ENCODE measurements at regions of chr13 and their contacts with region 1.

Region 1: DNA sequence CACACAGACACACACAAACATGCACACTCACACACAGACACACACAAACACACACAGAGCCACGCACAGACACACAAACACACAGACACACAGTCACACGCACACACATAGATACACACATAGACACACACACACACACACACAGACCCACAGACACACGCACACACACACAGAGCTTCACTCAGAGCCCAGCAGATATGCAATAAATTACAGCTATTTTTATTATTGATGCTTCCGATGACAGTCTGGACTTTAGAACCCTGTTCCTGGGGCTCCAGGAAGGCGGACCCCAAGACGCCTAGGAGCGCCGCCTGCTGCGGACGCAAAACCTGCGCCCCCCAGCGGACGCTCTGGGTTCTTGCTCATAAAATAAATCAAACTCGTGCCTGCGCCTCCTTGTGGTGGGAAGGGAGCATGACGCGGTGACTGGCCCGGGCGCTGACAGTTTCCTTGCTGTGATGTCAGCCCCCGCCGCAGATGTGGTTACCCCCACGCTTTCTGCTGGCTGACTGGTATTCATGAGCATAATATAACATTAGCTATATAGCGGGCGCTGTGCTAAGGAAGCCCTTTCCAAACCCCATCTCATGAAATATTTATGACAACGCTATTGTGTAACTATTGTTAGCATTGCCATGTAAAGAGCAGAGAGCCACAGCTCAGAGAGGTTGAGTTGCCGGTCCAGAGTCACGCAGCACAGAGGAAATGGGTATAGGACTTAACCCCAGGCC is 64.4 kb upstream of the TM9SF2 start:
- DNase-seq: peak; percentile 83
- CTCF ChIP-seq: peak; percentile 100

Region 2: GRCh38 chr13:99200432-99201167 is 236.3 kb before region 1 on chr13 and contains the start of gene UBAC2:
- CTCF ChIA-PET with region 1: interaction called, 13 read pairs
- POLR2A ChIA-PET with region 1: no interaction called
- DNase-seq: peak; percentile 99
- CTCF ChIP-seq: peak; percentile 6

Region 3: DNA sequence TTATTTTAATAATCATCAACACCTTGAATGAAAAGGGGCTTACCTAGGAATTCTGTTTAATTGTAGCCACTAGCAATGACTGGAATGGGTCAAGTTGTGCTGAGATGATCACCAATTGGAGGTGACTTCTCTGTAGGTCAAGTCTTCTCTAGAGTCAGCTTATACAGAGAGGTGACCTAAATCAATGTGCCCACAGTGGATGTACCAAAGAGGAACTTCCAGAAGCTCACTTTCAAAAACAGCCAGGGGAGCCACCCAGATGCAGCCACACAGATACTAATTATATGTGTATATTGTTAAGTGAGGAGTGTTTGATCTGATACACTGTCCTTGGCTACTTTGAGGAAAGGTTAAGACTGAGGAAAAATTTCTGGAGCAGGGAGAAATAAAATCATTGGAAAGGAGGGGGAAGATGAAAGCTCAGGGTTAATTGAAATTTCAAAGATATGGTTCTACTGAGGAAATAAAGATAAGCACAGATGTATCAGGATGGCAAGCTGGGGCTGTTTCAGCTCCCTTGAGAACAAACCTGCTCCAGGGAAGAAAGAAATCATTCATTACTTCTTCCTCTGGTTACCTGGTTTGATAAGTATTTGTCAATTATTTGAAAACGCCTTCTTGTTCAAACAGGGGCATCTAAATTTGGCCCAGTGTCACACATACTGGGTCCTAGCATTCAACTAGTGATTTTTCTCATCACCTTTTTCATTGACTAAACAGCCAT is 134.8 kb before region 1 on chr13:
- CTCF ChIA-PET with region 1: interaction called, 25 read pairs
- POLR2A ChIA-PET with region 1: no interaction called
- DNase-seq: no peak
- CTCF ChIP-seq: no peak

Region 4: DNA sequence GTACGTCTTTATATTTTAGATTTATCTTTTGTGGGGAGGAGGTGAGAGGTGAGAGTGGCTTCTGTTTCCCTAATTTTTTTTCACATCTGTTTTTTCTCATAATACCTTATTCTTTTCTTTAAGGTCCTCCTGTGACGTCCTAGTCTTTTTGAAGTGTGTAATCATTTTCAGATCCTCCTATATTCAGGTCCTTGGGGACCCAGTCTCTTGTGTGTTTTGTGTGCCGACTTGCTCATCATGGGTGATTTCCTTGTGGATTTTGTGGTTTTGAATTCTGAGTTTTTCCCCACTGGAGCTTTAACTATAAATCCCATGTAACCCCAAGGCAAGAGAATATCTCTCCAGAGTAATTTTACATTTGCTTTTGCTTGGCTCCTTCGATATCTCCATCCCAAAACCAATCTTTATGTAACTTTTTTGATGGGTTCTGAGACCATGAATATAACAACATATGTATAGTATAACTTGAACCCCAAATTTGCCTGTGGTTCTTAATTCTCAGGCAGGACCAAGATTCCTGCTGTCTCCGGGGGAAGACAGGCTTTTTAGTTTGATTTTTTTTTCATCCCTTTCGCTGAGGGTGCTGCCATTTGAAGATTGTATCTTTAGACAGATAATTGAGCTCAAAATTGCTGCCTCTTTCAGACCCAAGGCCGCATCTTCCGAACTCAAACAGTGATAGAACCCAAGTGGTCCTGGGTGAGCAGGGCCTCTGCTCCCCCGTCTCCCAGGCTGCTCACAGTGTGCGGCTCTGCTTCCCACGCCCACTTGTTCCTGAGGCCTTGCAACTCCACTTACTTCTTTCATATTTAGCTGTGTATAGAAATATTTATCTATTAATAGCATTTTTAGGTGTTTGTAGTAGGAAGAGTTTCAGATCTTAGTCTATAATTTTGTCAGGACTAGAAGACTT is 70.5 kb before region 1 on chr13:
- CTCF ChIA-PET with region 1: interaction called, 36 read pairs
- POLR2A ChIA-PET with region 1: no interaction called
- DNase-seq: no peak
- CTCF ChIP-seq: no peak

Region 5: GRCh38 chr13:99417201-99418102 is 19.4 kb before region 1 on chr13:
- CTCF ChIA-PET with region 1: interaction called, 155 read pairs
- POLR2A ChIA-PET with region 1: interaction called, 4 read pairs
- DNase-seq: no peak
- CTCF ChIP-seq: no peak

Region 6: GRCh38 chr13:99501184-99501847 is 64.5 kb after region 1 on chr13 and contains the start of gene TM9SF2:
- CTCF ChIA-PET with region 1: interaction called, 50 read pairs
- POLR2A ChIA-PET with region 1: no interaction called
- DNase-seq: peak; percentile 92
- CTCF ChIP-seq: no peak

Region 7: DNA sequence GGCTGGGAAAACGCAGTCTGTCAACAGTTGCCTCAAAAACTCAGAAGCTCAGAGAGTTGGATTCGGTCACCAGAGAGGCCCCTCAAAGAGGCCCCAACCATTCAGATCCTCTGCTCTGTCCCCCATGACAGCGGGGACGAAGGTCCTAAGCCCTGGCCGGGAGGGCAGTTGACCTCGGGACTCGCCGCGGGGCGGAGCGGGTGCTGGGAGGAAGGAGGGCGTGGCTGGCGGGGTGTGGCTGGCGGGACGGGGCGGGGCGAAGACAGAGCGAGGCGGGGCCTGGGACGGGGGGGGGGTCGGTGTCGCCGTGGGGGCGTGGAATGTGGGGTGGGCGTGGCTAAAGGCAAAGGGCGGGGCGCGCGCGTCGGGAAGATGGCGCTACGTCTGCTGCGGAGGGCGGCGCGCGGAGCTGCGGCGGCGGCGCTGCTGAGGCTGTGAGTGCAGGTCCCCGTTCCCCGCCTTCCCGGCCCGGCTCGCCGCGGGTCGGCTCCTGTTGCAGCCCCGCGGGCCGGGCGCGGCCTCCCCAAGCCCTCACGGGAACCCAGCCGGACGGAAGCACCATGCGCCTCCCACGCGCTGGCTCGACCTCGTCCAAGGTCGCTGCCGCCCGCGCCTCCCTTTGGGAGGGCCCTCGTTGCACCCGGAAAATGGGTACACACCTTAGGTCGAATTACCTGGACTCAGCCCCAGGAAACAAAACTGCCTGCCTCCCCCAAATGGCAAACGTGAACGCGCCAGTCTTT is 169.6 kb after region 1 on chr13:
- CTCF ChIA-PET with region 1: no interaction called
- POLR2A ChIA-PET with region 1: no interaction called
- DNase-seq: peak; percentile 97
- CTCF ChIP-seq: no peak

Region 8: GRCh38 chr13:99636728-99637353 is 200.0 kb after region 1 on chr13:
- CTCF ChIA-PET with region 1: no interaction called
- POLR2A ChIA-PET with region 1: no interaction called
- DNase-seq: no peak
- CTCF ChIP-seq: no peak

Region 9: GRCh38 chr13:99845161-99845874 is 408.5 kb after region 1 on chr13:
- CTCF ChIA-PET with region 1: no interaction called
- POLR2A ChIA-PET with region 1: no interaction called
- DNase-seq: no peak
- CTCF ChIP-seq: no peak

Measured in GM10248 (cell line).